T-cell (primary cell): ENCODE measurements at regions of chr3 and their contacts with region 1.

Region 1: DNA sequence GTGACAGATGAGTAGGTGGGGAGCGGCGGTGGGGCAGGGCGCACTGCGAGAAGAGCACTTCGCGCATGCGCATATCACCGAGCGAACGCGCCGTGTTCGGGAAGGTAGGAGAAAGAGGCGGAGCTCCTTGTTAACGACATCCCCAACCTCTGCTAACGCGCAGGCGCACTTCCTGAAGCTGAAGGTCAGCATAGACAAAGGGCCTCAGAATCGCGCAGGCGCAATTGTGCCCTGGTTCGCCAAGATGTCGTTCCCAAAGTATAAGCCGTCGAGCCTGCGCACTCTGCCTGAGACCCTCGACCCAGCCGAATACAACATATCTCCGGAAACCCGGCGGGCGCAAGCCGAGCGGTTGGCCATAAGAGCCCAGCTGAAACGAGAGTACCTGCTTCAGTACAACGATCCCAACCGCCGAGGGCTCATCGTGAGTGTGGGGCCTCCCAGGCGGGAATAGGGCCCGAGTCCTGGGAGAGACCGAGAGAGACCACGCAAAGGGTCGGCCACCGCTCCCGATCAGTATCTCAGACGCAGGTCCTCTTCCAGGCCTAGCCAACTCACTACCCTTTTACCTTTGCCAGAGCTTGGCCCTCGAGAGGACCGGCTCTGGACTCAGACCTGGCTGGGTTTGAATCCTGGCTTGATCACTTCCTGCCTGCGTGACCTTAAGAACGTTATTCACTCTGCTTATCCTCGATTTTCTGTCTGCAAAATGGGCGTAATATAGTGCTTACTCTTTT is at the start of gene NDUFB4:
- DNase-seq: peak; percentile 82 to 98 (median 93)
- ATAC-seq: peak; percentile 94 to 97 (median 96)
- H3K4me3 ChIP-seq: peak within 1 kb of the TSS; percentile 91 to 97
- H3K4me3 Mint-ChIP-seq: peak within 1 kb of the TSS in 2 of 3 donors; percentile 94 to 96
- H3K27ac ChIP-seq: peak within 1 kb of the TSS; percentile 96
- H3K27ac Mint-ChIP-seq: peak within 1 kb of the TSS; percentile 94 to 97
- H3K4me1 ChIP-seq: peaks cover 11 to 20% of the 10 kb centered on the region in 2 experiments
- H3K4me1 Mint-ChIP-seq: peaks cover 9 to 14% (median 10%) of the 10 kb centered on the region in 3 donors
- H3K27me3 ChIP-seq: no peaks in the 10 kb centered on the region
- H3K27me3 Mint-ChIP-seq: no peaks in the 10 kb centered on the region
- total RNA-seq, gene NDUFB4: 59.3 to 79.6 (median 73.6) TPM

Region 2: GRCh38 chr3:119600732-119601131 is 995.6 kb before region 1 on chr3:
- CTCF ChIA-PET with region 1: no interaction called
- POLR2A ChIA-PET with region 1: no interaction called
- DNase-seq: peak in 3 of 35 experiments; percentile 4 to 27 (median 4)
- ATAC-seq: peak in 3 of 4 experiments; percentile 37 to 55 (median 43)
- H3K4me3 ChIP-seq: no peak overlapping the region
- H3K4me3 Mint-ChIP-seq: no peak overlapping the region
- H3K27ac ChIP-seq: no peak overlapping the region
- H3K27ac Mint-ChIP-seq: no peak overlapping the region
- H3K4me1 ChIP-seq: no peaks in the 10 kb centered on the region
- H3K4me1 Mint-ChIP-seq: peaks cover 0 to 8% (median 5%) of the 10 kb centered on the region in 3 donors
- H3K27me3 ChIP-seq: no peaks in the 10 kb centered on the region
- H3K27me3 Mint-ChIP-seq: no peaks in the 10 kb centered on the region

Region 3: DNA sequence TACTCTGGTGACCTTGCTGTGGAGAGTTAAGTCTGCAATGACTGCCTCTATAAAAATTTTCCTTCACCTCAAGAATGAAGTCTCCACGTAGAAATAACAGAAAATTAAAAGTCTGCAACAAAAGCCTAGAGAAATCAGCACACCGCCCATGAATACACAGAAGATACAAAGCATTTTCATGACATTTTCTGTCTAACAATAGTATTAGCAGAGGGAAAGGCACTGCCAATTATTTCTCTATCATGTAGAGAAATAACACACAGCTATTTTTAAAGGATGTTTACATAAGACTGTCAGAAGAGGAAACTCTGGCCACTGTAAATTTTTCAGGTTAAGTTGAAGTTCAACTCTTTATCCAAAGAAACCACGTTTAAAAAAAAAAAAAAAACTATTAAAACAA is 582.8 kb before region 1 on chr3:
- CTCF ChIA-PET with region 1: no interaction called
- POLR2A ChIA-PET with region 1: no interaction called
- DNase-seq: no peak
- ATAC-seq: no peak
- H3K4me3 ChIP-seq: no peak overlapping the region
- H3K4me3 Mint-ChIP-seq: no peak overlapping the region
- H3K27ac ChIP-seq: no peak overlapping the region
- H3K27ac Mint-ChIP-seq: no peak overlapping the region
- H3K4me1 ChIP-seq: peaks cover 4 to 8% of the 10 kb centered on the region in 2 experiments
- H3K4me1 Mint-ChIP-seq: peaks cover 74 to 78% (median 77%) of the 10 kb centered on the region in 3 donors
- H3K27me3 ChIP-seq: no peaks in the 10 kb centered on the region
- H3K27me3 Mint-ChIP-seq: no peaks in the 10 kb centered on the region

Region 4: GRCh38 chr3:120095226-120095978 is 500.9 kb before region 1 on chr3:
- CTCF ChIA-PET with region 1: interaction called in 1 of 2 experiments, 3 read pairs
- POLR2A ChIA-PET with region 1: interaction called, 3 to 15 read pairs
- DNase-seq: peak; percentile 56 to 87 (median 81)
- ATAC-seq: peak; percentile 24 to 29 (median 28)
- H3K4me3 ChIP-seq: peak overlapping the region; percentile 82 to 85
- H3K4me3 Mint-ChIP-seq: no peak overlapping the region
- H3K27ac ChIP-seq: peak overlapping the region; percentile 99
- H3K27ac Mint-ChIP-seq: peak overlapping the region in 1 of 2 donors; percentile 98
- H3K4me1 ChIP-seq: peaks cover 13 to 22% of the 10 kb centered on the region in 2 experiments
- H3K4me1 Mint-ChIP-seq: peaks cover 22 to 29% (median 25%) of the 10 kb centered on the region in 3 donors
- H3K27me3 ChIP-seq: no peaks in the 10 kb centered on the region
- H3K27me3 Mint-ChIP-seq: no peaks in the 10 kb centered on the region

Region 5: DNA sequence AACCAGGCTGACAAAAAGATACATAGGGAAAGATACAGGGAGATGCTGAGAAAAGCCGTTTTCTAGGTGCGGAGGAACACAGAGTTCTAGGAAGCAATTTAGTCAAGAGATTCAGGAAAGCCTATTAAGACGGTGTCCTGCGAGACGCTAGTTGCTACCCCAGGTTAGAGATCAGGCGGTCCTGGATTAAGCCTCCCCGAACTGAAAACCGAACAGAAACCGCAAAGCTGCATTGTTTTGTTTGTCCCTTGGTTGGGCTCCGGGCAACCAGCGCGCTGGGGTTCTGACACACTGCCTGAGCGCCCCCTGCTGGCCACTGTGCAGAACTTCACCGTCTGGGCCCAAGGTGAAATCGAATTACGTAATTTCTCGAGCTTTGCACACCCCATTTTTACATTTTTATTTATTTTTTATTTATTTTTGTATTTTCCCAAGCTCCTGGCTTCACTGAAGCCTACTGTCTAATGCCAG is 37.5 kb before region 1 on chr3:
- CTCF ChIA-PET with region 1: interaction called, 11 to 46 read pairs
- POLR2A ChIA-PET with region 1: interaction called, 4 to 5 read pairs
- DNase-seq: peak; percentile 72 to 93 (median 86)
- ATAC-seq: peak; percentile 82 to 90 (median 86)
- H3K4me3 ChIP-seq: peak overlapping the region; percentile 48 to 63
- H3K4me3 Mint-ChIP-seq: peak overlapping the region; percentile 70 to 76 (median 74)
- H3K27ac ChIP-seq: no peak overlapping the region
- H3K27ac Mint-ChIP-seq: peak overlapping the region in 1 of 2 donors; percentile 46
- H3K4me1 ChIP-seq: peaks cover 5 to 16% of the 10 kb centered on the region in 2 experiments
- H3K4me1 Mint-ChIP-seq: peaks cover 16 to 25% (median 18%) of the 10 kb centered on the region in 3 donors
- H3K27me3 ChIP-seq: peaks cover 0 to 18% of the 10 kb centered on the region in 2 experiments
- H3K27me3 Mint-ChIP-seq: peaks cover 4 to 11% of the 10 kb centered on the region in 2 donors

Region 6: DNA sequence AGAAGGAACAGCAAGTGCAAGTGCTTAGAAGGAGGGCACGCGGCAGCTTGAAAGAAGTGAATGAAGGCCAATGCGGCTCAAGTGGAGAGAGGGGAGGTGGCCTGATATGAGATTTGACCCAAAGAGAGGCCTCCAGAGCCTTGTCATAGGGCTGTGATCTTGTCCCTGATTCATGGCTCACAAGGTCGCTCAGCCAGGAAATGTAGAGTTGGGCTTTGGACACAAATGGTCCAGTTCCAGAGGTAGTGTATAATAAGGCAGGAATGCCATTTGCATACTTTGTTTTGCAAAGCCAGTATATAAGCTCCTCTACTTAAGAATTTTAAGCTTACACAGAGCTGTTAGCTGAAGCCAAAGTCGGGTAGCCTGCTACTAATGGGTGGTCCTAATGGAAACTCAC is 52.0 kb after region 1 on chr3:
- CTCF ChIA-PET with region 1: interaction called in 1 of 2 experiments, 16 read pairs
- POLR2A ChIA-PET with region 1: no interaction called
- DNase-seq: no peak
- ATAC-seq: no peak
- H3K4me3 ChIP-seq: no peak overlapping the region
- H3K4me3 Mint-ChIP-seq: no peak overlapping the region
- H3K27ac ChIP-seq: no peak overlapping the region
- H3K27ac Mint-ChIP-seq: no peak overlapping the region
- H3K4me1 ChIP-seq: no peaks in the 10 kb centered on the region
- H3K4me1 Mint-ChIP-seq: no peaks in the 10 kb centered on the region
- H3K27me3 ChIP-seq: no peaks in the 10 kb centered on the region
- H3K27me3 Mint-ChIP-seq: no peaks in the 10 kb centered on the region

Region 7: GRCh38 chr3:120795017-120795648 is 198.8 kb after region 1 on chr3:
- CTCF ChIA-PET with region 1: interaction called, 4 to 10 read pairs
- POLR2A ChIA-PET with region 1: interaction called in 1 of 2 experiments, 4 read pairs
- DNase-seq: peak; percentile 52 to 89 (median 80)
- ATAC-seq: peak; percentile 85 to 98 (median 94)
- H3K4me3 ChIP-seq: no peak overlapping the region
- H3K4me3 Mint-ChIP-seq: no peak overlapping the region
- H3K27ac ChIP-seq: no peak overlapping the region
- H3K27ac Mint-ChIP-seq: no peak overlapping the region
- H3K4me1 ChIP-seq: peaks cover 0 to 2% of the 10 kb centered on the region in 2 experiments
- H3K4me1 Mint-ChIP-seq: peaks cover 11 to 14% (median 11%) of the 10 kb centered on the region in 3 donors
- H3K27me3 ChIP-seq: peaks cover 0 to 3% of the 10 kb centered on the region in 2 experiments
- H3K27me3 Mint-ChIP-seq: peaks cover 0 to 4% of the 10 kb centered on the region in 2 donors